WTC11 (cell line): ENCODE measurements at regions of chr11 and their contacts with region 1.

Region 1: DNA sequence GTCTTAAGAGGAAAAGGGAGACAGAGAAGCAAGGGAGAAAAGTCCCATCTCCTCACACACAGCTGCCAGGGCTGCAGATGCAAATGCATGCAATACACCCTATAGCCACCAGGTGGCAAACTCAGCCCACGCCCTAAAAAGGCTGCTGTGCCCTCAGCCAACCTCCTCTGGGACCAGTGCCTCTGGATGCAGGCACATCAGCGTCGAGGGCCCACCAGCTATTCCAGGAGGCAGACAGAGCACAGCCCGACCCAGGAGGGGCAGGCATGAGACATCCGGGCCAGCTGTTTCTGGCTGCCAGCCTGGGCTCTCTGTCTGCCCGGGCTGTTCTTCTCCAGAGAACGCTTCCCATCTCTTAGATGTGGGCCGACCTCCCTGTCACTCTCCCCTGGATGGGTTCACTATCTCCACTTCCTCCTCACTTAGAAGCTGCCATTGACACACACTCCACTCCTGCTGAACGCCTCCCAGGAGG is 39.7 kb downstream of the TPBGL start:
- DNase-seq: peak; percentile 88
- ATAC-seq: peak; percentile 94
- H3K4me3 Mint-ChIP-seq: no peak overlapping the region
- H3K27ac Mint-ChIP-seq: peak overlapping the region; percentile 82
- H3K4me1 Mint-ChIP-seq: peaks cover 36% of the 10 kb centered on the region
- H3K27me3 Mint-ChIP-seq: no peaks in the 10 kb centered on the region
- CTCF ChIP-seq: peak; percentile 94

Region 2: GRCh38 chr11:75241036-75241905 is 39.0 kb before region 1 on chr11:
- CTCF ChIA-PET with region 1: interaction called, 17 read pairs
- POLR2A ChIA-PET with region 1: no interaction called
- DNase-seq: peak; percentile 89
- ATAC-seq: peak; percentile 74
- H3K4me3 Mint-ChIP-seq: peak overlapping the region; percentile 53
- H3K27ac Mint-ChIP-seq: no peak overlapping the region
- H3K4me1 Mint-ChIP-seq: peaks cover 19% of the 10 kb centered on the region
- H3K27me3 Mint-ChIP-seq: peaks cover 75% of the 10 kb centered on the region
- CTCF ChIP-seq: peak; percentile 90

Region 3: GRCh38 chr11:75292943-75293342 is 12.7 kb after region 1 on chr11:
- CTCF ChIA-PET with region 1: interaction called, 25 read pairs
- POLR2A ChIA-PET with region 1: no interaction called
- DNase-seq: no peak
- ATAC-seq: no peak
- H3K4me3 Mint-ChIP-seq: no peak overlapping the region
- H3K27ac Mint-ChIP-seq: peak overlapping the region; percentile 38; the same call in 1 of the 2 replicates
- H3K4me1 Mint-ChIP-seq: peaks cover 29% of the 10 kb centered on the region
- H3K27me3 Mint-ChIP-seq: no peaks in the 10 kb centered on the region
- CTCF ChIP-seq: no peak

Region 4: DNA sequence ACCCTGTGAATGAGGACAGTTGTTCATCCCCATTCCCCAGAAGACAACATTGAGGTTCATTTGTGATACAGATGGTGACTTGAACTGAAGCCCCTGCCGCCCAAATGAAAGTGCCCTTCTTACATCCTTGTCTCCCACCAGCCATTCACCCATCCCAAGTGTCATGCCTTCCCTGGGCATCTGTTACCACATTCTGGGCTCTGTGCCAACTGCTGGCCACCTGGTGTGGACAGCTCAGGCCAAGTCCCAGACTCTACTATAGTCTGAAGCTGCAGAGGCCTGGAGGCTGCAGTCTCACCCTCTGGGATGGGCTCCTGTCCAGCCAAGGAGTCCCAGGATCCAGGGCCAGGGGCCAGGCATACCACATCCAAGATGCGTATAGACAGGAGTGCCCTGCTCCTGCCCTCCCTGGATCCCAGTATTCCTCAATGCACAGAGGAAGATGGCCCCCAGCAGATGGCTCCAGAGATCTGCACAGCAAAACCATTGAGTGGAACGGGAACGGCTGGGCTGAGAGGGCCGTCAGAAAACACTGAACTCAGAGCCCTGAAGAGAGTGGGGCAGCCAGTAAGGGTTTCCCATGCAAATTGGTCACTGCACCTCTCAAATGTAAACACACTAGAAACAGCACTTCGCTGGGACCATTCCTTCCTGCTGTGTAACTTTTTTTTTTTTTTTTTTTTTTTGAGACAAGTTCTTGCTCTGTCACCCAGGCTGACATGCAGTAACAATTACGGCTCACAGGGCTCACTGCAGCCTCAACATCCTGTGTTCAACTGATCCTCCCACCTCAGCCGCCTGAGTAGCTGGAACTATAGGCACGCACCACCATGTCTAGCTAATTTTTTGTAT is 48.4 kb after region 1 on chr11:
- CTCF ChIA-PET with region 1: interaction called, 16 read pairs
- POLR2A ChIA-PET with region 1: no interaction called
- DNase-seq: peak; percentile 71
- ATAC-seq: peak; percentile 72
- H3K4me3 Mint-ChIP-seq: no peak overlapping the region; the same call in 1 of the 2 replicates
- H3K27ac Mint-ChIP-seq: peak overlapping the region; percentile 99
- H3K4me1 Mint-ChIP-seq: peaks cover 86% of the 10 kb centered on the region
- H3K27me3 Mint-ChIP-seq: no peaks in the 10 kb centered on the region
- CTCF ChIP-seq: no peak

Region 5: DNA sequence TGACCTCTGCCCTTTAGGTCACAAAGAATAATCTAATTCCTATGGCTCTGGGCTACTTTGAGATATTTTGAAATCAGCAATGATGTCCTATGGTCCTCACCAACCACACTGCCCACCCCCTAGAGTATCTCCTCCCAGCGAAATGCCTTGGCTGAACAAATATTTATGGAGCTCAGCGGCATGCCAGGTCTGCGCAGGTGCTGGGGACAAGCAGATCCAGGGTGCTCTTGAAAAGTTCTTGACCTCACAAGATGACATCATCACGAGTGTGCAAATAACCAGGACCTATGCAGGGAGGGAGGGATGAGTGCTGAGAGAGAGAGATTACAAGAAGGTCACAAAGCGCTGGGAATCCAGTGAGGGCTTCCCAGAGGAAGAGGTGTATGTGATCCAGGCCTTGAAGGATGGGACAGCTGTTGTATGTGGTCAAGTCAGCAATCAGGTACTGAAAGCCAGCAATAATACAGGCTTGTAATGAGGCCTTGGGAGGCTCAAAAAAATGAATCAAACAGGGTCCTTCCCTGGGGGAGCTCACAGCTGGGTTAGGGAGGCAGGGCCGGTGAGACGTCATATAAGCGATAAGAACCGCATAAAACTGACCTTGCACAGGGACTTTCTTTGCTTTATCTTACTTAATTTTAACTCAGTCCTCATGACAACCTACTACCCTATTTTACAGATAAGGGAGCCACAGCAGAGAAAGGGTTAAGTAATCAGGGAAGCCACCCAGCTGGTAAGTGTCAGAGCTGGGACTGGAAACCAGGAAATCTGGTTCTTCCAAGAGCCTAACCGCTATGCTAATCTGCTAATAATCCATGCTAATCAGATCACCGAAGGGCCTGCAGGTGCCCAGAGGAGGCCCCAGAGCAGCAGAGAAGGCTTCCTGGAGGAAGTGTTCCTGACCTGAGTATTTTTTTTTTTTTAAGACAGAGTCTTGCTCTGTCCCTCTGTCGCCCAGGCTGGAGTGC is 62.9 kb after region 1 on chr11:
- CTCF ChIA-PET with region 1: interaction called, 36 read pairs
- POLR2A ChIA-PET with region 1: no interaction called
- DNase-seq: peak; percentile 32
- ATAC-seq: peak; percentile 66
- H3K4me3 Mint-ChIP-seq: peak overlapping the region; percentile 14; the same call in 1 of the 2 replicates
- H3K27ac Mint-ChIP-seq: peak overlapping the region; percentile 92
- H3K4me1 Mint-ChIP-seq: peaks cover 100% of the 10 kb centered on the region
- H3K27me3 Mint-ChIP-seq: no peaks in the 10 kb centered on the region
- CTCF ChIP-seq: no peak

Region 6: GRCh38 chr11:75380711-75381420 is 100.6 kb after region 1 on chr11:
- CTCF ChIA-PET with region 1: interaction called, 89 read pairs
- POLR2A ChIA-PET with region 1: interaction called, 4 read pairs
- DNase-seq: no peak
- ATAC-seq: no peak
- H3K4me3 Mint-ChIP-seq: no peak overlapping the region
- H3K27ac Mint-ChIP-seq: 0 out of 2 replicates have a peak overlapping the region, but pooled peaks have one; percentile 47
- H3K4me1 Mint-ChIP-seq: peaks cover 30% of the 10 kb centered on the region
- H3K27me3 Mint-ChIP-seq: peaks cover 2% of the 10 kb centered on the region; the same call in 1 of the 2 replicates
- CTCF ChIP-seq: no peak

Region 7: GRCh38 chr11:75425422-75425821 is 145.2 kb after region 1 on chr11:
- CTCF ChIA-PET with region 1: interaction called, 26 read pairs
- POLR2A ChIA-PET with region 1: interaction called, 5 read pairs
- DNase-seq: peak; percentile 81
- ATAC-seq: peak; percentile 73
- H3K4me3 Mint-ChIP-seq: no peak overlapping the region
- H3K27ac Mint-ChIP-seq: no peak overlapping the region
- H3K4me1 Mint-ChIP-seq: peaks cover 21% of the 10 kb centered on the region
- H3K27me3 Mint-ChIP-seq: peaks cover 42% of the 10 kb centered on the region
- CTCF ChIP-seq: no peak; the same call in 1 of the 2 replicates